Activated CD8-positive, alpha-beta T cell treated with anti-CD3 and anti-CD28 coated beads for 36 hours (primary cell): ENCODE measurements at regions of chr5 and their contacts with region 1.

Region 1: GRCh38 chr5:129125810-129126209 is 31.3 kb downstream of the ISOC1 start:
- DNase-seq: no peak
- ATAC-seq: peak; percentile 64
- H3K4me3 Mint-ChIP-seq: peak overlapping the region; percentile 29
- H3K27ac Mint-ChIP-seq: peak overlapping the region; percentile 82
- H3K4me1 Mint-ChIP-seq: peaks cover 9% of the 10 kb centered on the region
- H3K27me3 Mint-ChIP-seq: no peaks in the 10 kb centered on the region
- CTCF ChIP-seq: peak; percentile 14

Region 2: DNA sequence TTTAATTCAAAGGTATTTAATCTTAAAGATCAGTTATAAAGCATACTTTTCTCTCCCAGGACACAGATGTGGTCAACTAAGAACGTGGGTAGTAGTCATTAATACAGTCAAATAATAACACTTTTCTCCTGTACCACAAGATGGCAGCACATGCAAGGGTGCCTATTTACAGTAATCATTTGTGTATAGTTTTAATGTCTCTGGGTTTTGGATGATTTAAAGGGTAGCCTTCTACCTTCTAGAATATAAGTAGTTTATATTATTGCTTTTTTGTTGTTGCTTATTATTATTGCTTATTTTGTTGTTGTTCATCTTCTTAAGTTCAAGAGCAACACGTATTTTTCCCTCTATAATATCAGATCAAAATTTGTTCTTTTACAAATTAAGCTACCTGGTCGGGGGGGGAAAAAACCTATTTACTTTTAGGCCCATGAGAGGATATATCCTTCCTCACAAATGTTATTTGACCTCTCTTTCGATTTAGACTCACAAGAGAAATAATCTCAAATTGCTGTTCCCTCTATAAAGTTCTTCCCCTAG is 220.2 kb before region 1 on chr5:
- CTCF ChIA-PET with region 1: interaction called, 15 read pairs
- POLR2A ChIA-PET with region 1: no interaction called
- intact Hi-C with region 1: loop called (anchors 10 kb)
- DNase-seq: peak; percentile 40
- ATAC-seq: peak; percentile 76
- H3K4me3 Mint-ChIP-seq: no peak overlapping the region
- H3K27ac Mint-ChIP-seq: no peak overlapping the region
- H3K4me1 Mint-ChIP-seq: no peaks in the 10 kb centered on the region
- H3K27me3 Mint-ChIP-seq: no peaks in the 10 kb centered on the region
- CTCF ChIP-seq: peak; percentile 87

Region 3: DNA sequence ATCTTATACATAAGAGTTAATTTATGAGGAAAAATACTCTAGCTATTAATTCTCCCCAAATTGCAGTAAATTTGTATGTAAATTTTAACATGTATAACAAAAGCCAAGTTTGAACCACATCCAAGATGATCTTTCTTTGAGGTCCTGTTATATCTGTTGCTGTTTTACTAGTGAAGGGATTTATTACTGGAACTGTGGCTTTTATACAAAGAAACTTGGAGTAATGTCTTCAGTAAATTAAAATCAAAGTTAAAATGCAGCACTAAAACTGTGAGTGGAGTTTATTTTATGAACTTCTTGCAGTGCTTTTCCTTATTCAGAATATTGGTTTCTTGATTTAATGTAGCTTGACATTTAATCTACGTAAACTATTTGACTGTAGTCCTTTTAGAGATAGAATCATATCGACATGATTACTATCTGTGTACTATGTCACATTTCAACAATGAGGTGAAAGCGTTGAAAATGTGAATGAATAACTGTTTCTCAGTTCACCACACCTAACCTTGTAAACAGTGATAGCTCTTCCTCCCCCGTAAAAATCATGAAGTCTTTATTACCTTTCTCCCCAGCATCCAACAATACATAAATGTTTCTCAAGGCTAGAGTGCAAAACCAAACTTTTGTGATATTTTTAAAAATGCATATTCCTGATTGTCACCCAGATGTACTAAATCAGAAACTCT is 84.5 kb before region 1 on chr5:
- CTCF ChIA-PET with region 1: no interaction called
- POLR2A ChIA-PET with region 1: no interaction called
- intact Hi-C with region 1: no loop called
- DNase-seq: no peak
- ATAC-seq: no peak
- H3K4me3 Mint-ChIP-seq: no peak overlapping the region
- H3K27ac Mint-ChIP-seq: no peak overlapping the region
- H3K4me1 Mint-ChIP-seq: no peaks in the 10 kb centered on the region
- H3K27me3 Mint-ChIP-seq: peaks cover 2% of the 10 kb centered on the region
- CTCF ChIP-seq: no peak

Region 4: GRCh38 chr5:129110742-129111141 is 15.1 kb before region 1 on chr5:
- CTCF ChIA-PET with region 1: interaction called, 11 read pairs
- POLR2A ChIA-PET with region 1: interaction called, 4 read pairs
- intact Hi-C with region 1: no loop called
- DNase-seq: no peak
- ATAC-seq: no peak
- H3K4me3 Mint-ChIP-seq: no peak overlapping the region
- H3K27ac Mint-ChIP-seq: no peak overlapping the region
- H3K4me1 Mint-ChIP-seq: peaks cover 2% of the 10 kb centered on the region
- H3K27me3 Mint-ChIP-seq: no peaks in the 10 kb centered on the region
- CTCF ChIP-seq: no peak